ENCODE measurements at regions of chr4 and their contacts with region 1.

Region 1: DNA sequence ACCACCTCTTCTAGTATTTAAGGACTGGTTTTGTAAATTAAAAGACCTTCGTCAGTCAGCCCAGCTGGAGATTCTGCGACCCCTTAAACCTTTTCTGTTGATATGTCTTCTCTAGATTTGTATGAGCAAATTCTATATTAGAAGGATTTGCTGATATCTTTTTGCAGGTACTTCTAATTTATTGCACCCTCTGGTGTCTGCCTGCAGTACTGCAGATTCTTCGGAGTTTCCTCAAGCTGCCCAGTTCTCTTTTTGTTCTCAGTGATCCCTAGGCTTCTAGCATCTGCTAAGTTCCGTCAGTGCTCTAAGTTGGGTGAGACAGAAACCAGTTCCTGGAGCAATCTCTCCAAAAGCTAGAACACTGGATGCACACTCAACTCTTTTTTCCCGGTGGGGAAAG is 545.2 kb downstream of the C4orf33 start:
- DNase-seq: peak in 6 of 9 donors; percentile 4 to 47 (median 33)
- ATAC-seq: peak; percentile 63
- H3K4me3 ChIP-seq: no peak overlapping the region
- H3K4me3 Mint-ChIP-seq: no peak overlapping the region
- H3K27ac ChIP-seq: no peak overlapping the region
- H3K27ac Mint-ChIP-seq: no peak overlapping the region
- H3K4me1 ChIP-seq: no peaks in the 10 kb centered on the region
- H3K4me1 Mint-ChIP-seq: no peaks in the 10 kb centered on the region
- H3K27me3 ChIP-seq: no peaks in the 10 kb centered on the region
- H3K27me3 Mint-ChIP-seq: peaks cover 0 to 6% (median 0%) of the 10 kb centered on the region in 5 donors

Region 2: GRCh38 chr4:128782076-128782715 is 859.0 kb before region 1 on chr4:
- CTCF ChIA-PET with region 1: no interaction called
- POLR2A ChIA-PET with region 1: no interaction called
- intact Hi-C with region 1: loop called in 1 of 2 experiments (anchors 5 kb)
- DNase-seq: peak in 8 of 9 donors; percentile 11 to 66 (median 58)
- ATAC-seq: peak; percentile 77
- H3K4me3 ChIP-seq: no peak overlapping the region
- H3K4me3 Mint-ChIP-seq: no peak overlapping the region
- H3K27ac ChIP-seq: no peak overlapping the region
- H3K27ac Mint-ChIP-seq: no peak overlapping the region
- H3K4me1 ChIP-seq: no peaks in the 10 kb centered on the region
- H3K4me1 Mint-ChIP-seq: no peaks in the 10 kb centered on the region
- H3K27me3 ChIP-seq: no peaks in the 10 kb centered on the region
- H3K27me3 Mint-ChIP-seq: peaks cover 0 to 8% (median 4%) of the 10 kb centered on the region in 5 donors

Region 3: DNA sequence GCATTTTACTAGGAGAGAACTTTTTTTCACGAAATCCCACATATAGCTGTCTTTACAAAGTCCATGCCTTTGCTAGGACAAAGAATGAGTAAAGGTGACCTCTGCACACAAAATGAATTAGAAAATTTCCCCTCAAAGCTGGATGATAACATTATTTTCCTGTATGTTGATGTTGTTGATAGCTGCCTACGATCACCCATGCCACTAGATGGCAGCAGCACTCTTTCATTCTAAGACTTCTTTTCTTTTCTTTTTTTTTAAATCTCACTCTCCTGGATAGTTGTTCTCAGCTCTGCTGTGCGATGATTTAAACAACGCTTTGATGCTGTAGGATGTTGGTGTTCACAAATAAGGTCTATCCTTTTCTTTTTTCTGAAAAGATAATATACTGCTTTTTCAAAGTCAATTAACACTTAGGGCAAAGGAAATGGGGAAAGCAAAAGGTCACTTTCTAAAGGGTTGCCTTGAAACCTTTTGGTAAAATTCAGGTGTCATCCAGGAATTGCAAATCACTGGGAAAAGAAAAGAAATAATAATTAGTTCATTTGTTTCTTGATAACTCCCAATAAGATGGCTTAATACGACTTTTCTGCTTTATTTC is 278.4 kb before region 1 on chr4:
- CTCF ChIA-PET with region 1: no interaction called
- POLR2A ChIA-PET with region 1: no interaction called
- intact Hi-C with region 1: loop called in 1 of 2 experiments (anchors 1 kb)
- DNase-seq: peak in 8 of 9 donors; percentile 2 to 60 (median 36)
- ATAC-seq: peak; percentile 60
- H3K4me3 ChIP-seq: no peak overlapping the region
- H3K4me3 Mint-ChIP-seq: no peak overlapping the region
- H3K27ac ChIP-seq: no peak overlapping the region
- H3K27ac Mint-ChIP-seq: no peak overlapping the region
- H3K4me1 ChIP-seq: no peaks in the 10 kb centered on the region
- H3K4me1 Mint-ChIP-seq: peaks cover 0 to 4% (median 0%) of the 10 kb centered on the region in 7 donors
- H3K27me3 ChIP-seq: no peaks in the 10 kb centered on the region
- H3K27me3 Mint-ChIP-seq: peaks cover 3 to 37% (median 10%) of the 10 kb centered on the region in 5 donors

Region 4: DNA sequence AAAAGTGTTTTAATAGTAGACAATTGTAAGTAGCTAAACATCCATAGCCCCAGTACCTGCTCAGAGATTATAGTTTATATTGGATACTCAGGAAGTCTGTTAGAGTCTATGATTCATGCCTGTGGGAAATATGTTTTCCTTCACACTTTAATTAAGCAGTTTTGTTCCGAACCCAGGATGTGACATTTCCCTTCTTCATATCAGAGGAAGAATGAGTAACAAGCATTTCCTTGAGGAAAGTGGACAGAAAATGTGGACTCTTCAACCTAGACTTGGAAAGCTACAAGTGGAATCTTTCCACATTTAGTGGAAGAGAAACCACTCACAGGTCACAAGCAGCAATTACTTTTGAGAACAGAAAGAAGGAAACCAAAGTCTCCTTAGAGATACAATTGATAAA is 125.8 kb before region 1 on chr4:
- CTCF ChIA-PET with region 1: no interaction called
- POLR2A ChIA-PET with region 1: no interaction called
- intact Hi-C with region 1: no loop called
- DNase-seq: no peak
- ATAC-seq: no peak
- H3K4me3 ChIP-seq: no peak overlapping the region
- H3K4me3 Mint-ChIP-seq: no peak overlapping the region
- H3K27ac ChIP-seq: no peak overlapping the region
- H3K27ac Mint-ChIP-seq: no peak overlapping the region
- H3K4me1 ChIP-seq: no peaks in the 10 kb centered on the region
- H3K4me1 Mint-ChIP-seq: no peaks in the 10 kb centered on the region
- H3K27me3 ChIP-seq: no peaks in the 10 kb centered on the region
- H3K27me3 Mint-ChIP-seq: no peaks in the 10 kb centered on the region

Region 5: DNA sequence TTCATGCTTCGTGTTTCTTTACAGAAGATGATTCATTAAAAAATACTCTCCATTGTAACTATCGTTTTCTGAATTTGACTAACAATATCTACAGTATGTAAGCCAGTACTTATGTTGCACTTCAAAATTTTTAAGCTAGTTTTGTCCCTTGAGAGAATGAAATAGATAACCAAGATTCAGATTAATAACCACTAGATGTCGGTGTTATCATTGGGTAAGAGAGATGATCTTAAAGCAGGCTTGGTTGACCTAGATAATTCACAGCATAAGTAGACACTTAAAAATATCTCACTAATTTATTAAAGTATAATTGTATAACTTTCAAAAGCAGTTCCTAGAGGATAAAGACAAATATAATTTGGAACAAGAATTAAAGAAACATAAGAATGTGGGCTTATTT is 114.4 kb before region 1 on chr4:
- CTCF ChIA-PET with region 1: no interaction called
- POLR2A ChIA-PET with region 1: no interaction called
- intact Hi-C with region 1: loop called in 1 of 2 experiments (anchors 1 kb)
- DNase-seq: peak in 1 of 9 donors; percentile 13
- ATAC-seq: no peak
- H3K4me3 ChIP-seq: no peak overlapping the region
- H3K4me3 Mint-ChIP-seq: no peak overlapping the region
- H3K27ac ChIP-seq: no peak overlapping the region
- H3K27ac Mint-ChIP-seq: no peak overlapping the region
- H3K4me1 ChIP-seq: no peaks in the 10 kb centered on the region
- H3K4me1 Mint-ChIP-seq: no peaks in the 10 kb centered on the region
- H3K27me3 ChIP-seq: no peaks in the 10 kb centered on the region
- H3K27me3 Mint-ChIP-seq: no peaks in the 10 kb centered on the region

Region 6: DNA sequence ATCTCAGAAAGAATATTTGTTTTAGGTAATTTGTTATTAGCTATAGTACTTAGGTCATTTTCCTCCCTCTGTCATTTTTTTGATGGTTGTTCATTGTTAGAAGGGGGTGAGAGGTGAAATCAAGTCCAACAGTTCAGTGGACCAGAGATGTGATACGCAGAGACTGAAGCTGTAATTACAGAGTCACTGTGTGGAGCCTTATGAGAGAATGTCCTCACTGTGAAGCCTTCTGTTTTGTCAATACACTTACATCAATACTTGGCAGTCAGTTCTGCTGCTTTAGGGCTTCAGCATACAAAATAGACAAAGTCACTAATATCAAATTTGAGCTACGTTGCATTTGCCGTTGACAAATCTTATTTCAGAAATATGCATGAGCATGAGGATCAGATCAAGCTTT is 147.3 kb after region 1 on chr4:
- CTCF ChIA-PET with region 1: no interaction called
- POLR2A ChIA-PET with region 1: no interaction called
- intact Hi-C with region 1: no loop called
- DNase-seq: no peak
- ATAC-seq: no peak
- H3K4me3 ChIP-seq: no peak overlapping the region
- H3K4me3 Mint-ChIP-seq: no peak overlapping the region
- H3K27ac ChIP-seq: no peak overlapping the region
- H3K27ac Mint-ChIP-seq: no peak overlapping the region
- H3K4me1 ChIP-seq: no peaks in the 10 kb centered on the region
- H3K4me1 Mint-ChIP-seq: no peaks in the 10 kb centered on the region
- H3K27me3 ChIP-seq: no peaks in the 10 kb centered on the region
- H3K27me3 Mint-ChIP-seq: no peaks in the 10 kb centered on the region